ENCODE measurements at regions of chr12 and their contacts with region 1.

Region 1: GRCh38 chr12:14454098-14454907 is 88.8 kb downstream of the ATF7IP start:
- DNase-seq: peak; percentile 71 to 75
- H3K4me3 ChIP-seq: no peak overlapping the region
- H3K4me3 Mint-ChIP-seq: no peak overlapping the region
- H3K27ac Mint-ChIP-seq: no peak overlapping the region
- H3K4me1 ChIP-seq: 0 out of 2 replicates have a peak, but pooled peaks cover 11% of the 10 kb centered on the region
- H3K4me1 Mint-ChIP-seq: peaks cover 13% of the 10 kb centered on the region
- H3K27me3 ChIP-seq: no peaks in the 10 kb centered on the region
- H3K27me3 Mint-ChIP-seq: no peaks in the 10 kb centered on the region
- CTCF ChIP-seq: peak; percentile 89 to 96

Region 2: DNA sequence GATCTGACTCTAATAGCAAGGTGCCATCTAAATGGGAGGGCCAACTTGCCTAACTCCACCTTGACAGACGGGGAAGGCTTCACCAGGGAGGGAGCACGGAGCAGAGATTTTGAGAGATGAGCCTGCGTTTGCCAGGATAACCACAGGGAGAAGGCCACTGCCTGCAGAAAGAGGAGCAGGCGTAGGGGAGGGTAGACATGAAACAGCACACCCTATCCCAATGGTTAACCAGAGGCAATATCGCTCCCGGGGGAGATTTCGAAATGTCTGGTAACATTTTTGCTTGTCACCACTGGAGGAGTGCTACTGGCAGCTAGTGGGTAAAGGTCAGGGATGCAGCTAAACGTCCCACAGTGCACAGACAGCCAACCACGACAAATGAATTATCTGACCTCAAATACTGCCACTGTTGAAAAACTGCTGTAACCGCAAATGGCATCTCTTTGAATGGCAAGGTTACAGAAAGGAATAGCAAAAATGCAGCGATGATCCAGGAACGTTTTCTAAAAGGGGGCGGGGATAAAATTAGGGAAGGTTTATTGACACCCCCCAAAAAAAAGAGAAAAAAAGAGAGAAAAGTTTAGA is 214.9 kb before region 1 on chr12:
- CTCF ChIA-PET with region 1: interaction called, 14 read pairs
- POLR2A ChIA-PET with region 1: no interaction called
- intact Hi-C with region 1: loop called (anchors 1 kb)
- DNase-seq: peak; percentile 64 to 85
- H3K4me3 ChIP-seq: no peak overlapping the region
- H3K4me3 Mint-ChIP-seq: peak overlapping the region; percentile 32
- H3K27ac Mint-ChIP-seq: peak overlapping the region; percentile 43
- H3K4me1 ChIP-seq: peaks cover 18% of the 10 kb centered on the region
- H3K4me1 Mint-ChIP-seq: peaks cover 9% of the 10 kb centered on the region
- H3K27me3 ChIP-seq: no peaks in the 10 kb centered on the region
- H3K27me3 Mint-ChIP-seq: no peaks in the 10 kb centered on the region
- CTCF ChIP-seq: peak in 1 of 2 experiments; percentile 16

Region 3: GRCh38 chr12:14257734-14258574 is 196.3 kb before region 1 on chr12:
- CTCF ChIA-PET with region 1: interaction called, 3 read pairs
- POLR2A ChIA-PET with region 1: no interaction called
- intact Hi-C with region 1: loop called (anchors 1 kb)
- DNase-seq: peak; percentile 70 to 87
- H3K4me3 ChIP-seq: no peak overlapping the region
- H3K4me3 Mint-ChIP-seq: peak overlapping the region; percentile 12
- H3K27ac Mint-ChIP-seq: peak overlapping the region; percentile 38
- H3K4me1 ChIP-seq: peaks cover 19% of the 10 kb centered on the region
- H3K4me1 Mint-ChIP-seq: peaks cover 12% of the 10 kb centered on the region
- H3K27me3 ChIP-seq: no peaks in the 10 kb centered on the region
- H3K27me3 Mint-ChIP-seq: no peaks in the 10 kb centered on the region
- CTCF ChIP-seq: no peak

Region 4: DNA sequence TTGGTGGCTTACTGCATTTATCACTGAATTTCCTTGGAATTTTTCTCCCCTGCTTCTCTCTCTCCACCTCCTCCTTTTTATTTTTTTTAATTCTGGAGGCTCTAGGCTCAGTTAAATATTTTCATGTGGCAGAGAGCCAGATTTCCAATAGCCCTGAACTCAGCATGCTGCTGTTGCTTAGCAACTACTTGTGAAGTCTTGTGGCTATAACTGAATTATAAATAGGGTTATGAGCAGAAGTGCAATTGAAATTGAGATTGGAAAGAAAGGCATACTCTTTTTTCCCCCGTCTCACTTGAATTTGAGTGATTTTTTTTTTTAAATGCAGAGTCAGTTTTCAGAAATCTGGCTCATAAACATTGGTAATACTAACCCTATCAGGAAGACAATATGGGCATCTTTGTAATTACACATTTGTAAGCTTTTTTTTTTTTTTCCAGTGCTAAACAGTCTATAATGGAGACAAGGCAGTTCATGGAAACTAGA is 50.5 kb before region 1 on chr12:
- CTCF ChIA-PET with region 1: no interaction called
- POLR2A ChIA-PET with region 1: interaction called, 10 read pairs
- intact Hi-C with region 1: no loop called
- DNase-seq: no peak
- H3K4me3 ChIP-seq: no peak overlapping the region
- H3K4me3 Mint-ChIP-seq: no peak overlapping the region
- H3K27ac Mint-ChIP-seq: no peak overlapping the region
- H3K4me1 ChIP-seq: no peaks in the 10 kb centered on the region
- H3K4me1 Mint-ChIP-seq: no peaks in the 10 kb centered on the region
- H3K27me3 ChIP-seq: no peaks in the 10 kb centered on the region
- H3K27me3 Mint-ChIP-seq: no peaks in the 10 kb centered on the region
- CTCF ChIP-seq: no peak